ENCODE measurements at regions of chr20 and their contacts with region 1.

Region 1: GRCh38 chr20:59403261-59403961 is 103.0 kb downstream of the EDN3 start:
- DNase-seq: peak; percentile 93
- H3K4me3 Mint-ChIP-seq: peak overlapping the region; percentile 64
- H3K27ac Mint-ChIP-seq: no peak overlapping the region
- H3K4me1 Mint-ChIP-seq: no peaks in the 10 kb centered on the region
- H3K27me3 Mint-ChIP-seq: peaks cover 21% of the 10 kb centered on the region

Region 2: GRCh38 chr20:58870239-58871014 is 533.0 kb before region 1 on chr20:
- intact Hi-C with region 1: loop called (anchors 5 kb)
- DNase-seq: peak; percentile 86
- H3K4me3 Mint-ChIP-seq: no peak overlapping the region
- H3K27ac Mint-ChIP-seq: no peak overlapping the region
- H3K4me1 Mint-ChIP-seq: peaks cover 7% of the 10 kb centered on the region
- H3K27me3 Mint-ChIP-seq: peaks cover 27% of the 10 kb centered on the region

Region 3: DNA sequence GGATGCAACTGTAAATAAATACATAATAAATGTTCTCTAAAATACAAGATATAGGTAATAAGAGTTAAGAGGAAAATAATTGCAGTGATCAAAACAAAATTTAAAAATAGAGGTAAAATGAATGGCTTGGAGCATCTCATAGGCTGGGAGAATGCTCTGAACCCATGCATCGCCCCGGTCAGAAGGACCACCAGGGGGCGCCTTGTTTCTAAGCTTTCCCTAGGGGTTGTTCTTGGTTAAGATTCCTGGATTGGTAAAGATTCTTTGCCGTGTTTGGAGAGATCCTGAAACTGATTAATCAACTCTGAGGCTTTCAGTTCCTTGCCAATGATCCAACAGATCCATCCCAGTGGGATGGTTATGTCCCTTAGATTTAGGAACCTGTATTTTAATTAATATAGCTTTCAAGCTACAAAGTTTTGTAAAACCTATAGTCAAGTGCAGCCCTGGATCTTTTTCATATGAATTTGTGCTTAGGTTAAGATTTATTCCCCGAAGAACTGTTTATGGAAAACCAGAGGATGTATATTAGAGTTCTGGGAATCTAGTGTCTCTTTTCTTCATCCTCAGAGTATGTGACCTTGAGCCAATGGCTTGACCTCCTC is 315.5 kb before region 1 on chr20:
- intact Hi-C with region 1: loop called (anchors 5 kb)
- DNase-seq: peak; percentile 94
- H3K4me3 Mint-ChIP-seq: no peak overlapping the region
- H3K27ac Mint-ChIP-seq: no peak overlapping the region
- H3K4me1 Mint-ChIP-seq: no peaks in the 10 kb centered on the region
- H3K27me3 Mint-ChIP-seq: peaks cover 39% of the 10 kb centered on the region

Region 4: GRCh38 chr20:59299944-59300331 is 103.5 kb before region 1 on chr20:
- intact Hi-C with region 1: no loop called
- DNase-seq: no peak
- H3K4me3 Mint-ChIP-seq: no peak overlapping the region
- H3K27ac Mint-ChIP-seq: no peak overlapping the region
- H3K4me1 Mint-ChIP-seq: peaks cover 2% of the 10 kb centered on the region
- H3K27me3 Mint-ChIP-seq: peaks cover 63% of the 10 kb centered on the region